ENCODE measurements at regions of chr6 and their contacts with region 1.

Region 1: GRCh38 chr6:42928986-42929820 is at the start of gene CNPY3:
- DNase-seq: peak; percentile 98
- H3K4me3 Mint-ChIP-seq: peak within 1 kb of the TSS; percentile 100
- H3K27ac Mint-ChIP-seq: peak within 1 kb of the TSS; percentile 94
- H3K4me1 Mint-ChIP-seq: peaks cover 36% of the 10 kb centered on the region
- H3K27me3 Mint-ChIP-seq: no peaks in the 10 kb centered on the region
- total RNA-seq, gene CNPY3: 51.1 to 53.2 TPM

Region 2: GRCh38 chr6:42782622-42783176 is 146.5 kb before region 1 on chr6:
- CTCF ChIA-PET with region 1: no interaction called
- POLR2A ChIA-PET with region 1: interaction called, 15 read pairs
- DNase-seq: peak; percentile 64
- H3K4me3 Mint-ChIP-seq: peak overlapping the region; percentile 95
- H3K27ac Mint-ChIP-seq: peak overlapping the region; percentile 100
- H3K4me1 Mint-ChIP-seq: peaks cover 18% of the 10 kb centered on the region
- H3K27me3 Mint-ChIP-seq: no peaks in the 10 kb centered on the region

Region 3: DNA sequence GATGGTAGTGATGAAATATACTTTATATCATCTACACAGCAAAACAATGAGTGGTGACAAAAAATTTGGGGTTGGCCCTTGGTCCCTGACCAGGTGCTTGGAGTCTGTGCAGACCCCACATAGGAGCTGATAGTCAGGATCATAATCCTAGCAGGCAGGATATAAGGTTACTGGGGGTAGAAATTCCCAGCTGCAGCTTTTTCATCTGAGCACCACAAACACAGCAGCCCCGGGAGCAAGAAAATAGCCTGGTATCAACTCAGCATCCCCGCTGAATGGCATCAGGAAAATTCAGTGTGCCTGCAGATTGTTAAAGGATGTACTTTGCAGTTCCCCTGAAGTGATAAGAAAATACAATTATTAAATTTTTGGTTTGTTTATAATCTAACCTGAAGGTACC is 77.6 kb before region 1 on chr6:
- CTCF ChIA-PET with region 1: no interaction called
- POLR2A ChIA-PET with region 1: no interaction called
- DNase-seq: no peak
- H3K4me3 Mint-ChIP-seq: no peak overlapping the region
- H3K27ac Mint-ChIP-seq: no peak overlapping the region
- H3K4me1 Mint-ChIP-seq: no peaks in the 10 kb centered on the region
- H3K27me3 Mint-ChIP-seq: no peaks in the 10 kb centered on the region

Region 4: DNA sequence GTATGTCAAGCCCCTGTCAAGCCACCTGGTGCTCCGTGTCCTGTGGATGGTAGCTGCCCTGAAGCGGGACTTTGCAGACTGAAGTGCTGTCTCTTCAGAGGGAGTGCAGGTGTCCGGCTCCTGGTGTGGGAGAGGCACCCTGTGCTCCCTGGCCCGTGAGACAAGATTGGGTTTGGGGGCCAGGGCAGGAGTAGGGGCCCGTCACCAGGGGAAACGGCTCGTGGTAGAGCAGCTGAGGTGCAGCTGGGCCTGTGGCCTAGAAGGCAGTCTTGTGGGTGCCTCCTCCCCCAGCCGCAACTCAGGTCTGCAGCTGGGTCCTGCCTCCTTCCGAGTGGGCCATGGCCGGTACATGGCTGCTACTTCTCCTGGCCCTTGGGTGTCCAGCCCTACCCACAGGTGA is 13.5 kb before region 1 on chr6 and contains the start of gene PTCRA:
- CTCF ChIA-PET with region 1: interaction called, 4 read pairs
- POLR2A ChIA-PET with region 1: interaction called, 11 read pairs
- DNase-seq: no peak
- H3K4me3 Mint-ChIP-seq: no peak within 1 kb of the TSS
- H3K27ac Mint-ChIP-seq: no peak within 1 kb of the TSS
- H3K4me1 Mint-ChIP-seq: peaks cover 2% of the 10 kb centered on the region
- H3K27me3 Mint-ChIP-seq: peaks cover 15% of the 10 kb centered on the region
- total RNA-seq, gene PTCRA: not detected

Region 5: DNA sequence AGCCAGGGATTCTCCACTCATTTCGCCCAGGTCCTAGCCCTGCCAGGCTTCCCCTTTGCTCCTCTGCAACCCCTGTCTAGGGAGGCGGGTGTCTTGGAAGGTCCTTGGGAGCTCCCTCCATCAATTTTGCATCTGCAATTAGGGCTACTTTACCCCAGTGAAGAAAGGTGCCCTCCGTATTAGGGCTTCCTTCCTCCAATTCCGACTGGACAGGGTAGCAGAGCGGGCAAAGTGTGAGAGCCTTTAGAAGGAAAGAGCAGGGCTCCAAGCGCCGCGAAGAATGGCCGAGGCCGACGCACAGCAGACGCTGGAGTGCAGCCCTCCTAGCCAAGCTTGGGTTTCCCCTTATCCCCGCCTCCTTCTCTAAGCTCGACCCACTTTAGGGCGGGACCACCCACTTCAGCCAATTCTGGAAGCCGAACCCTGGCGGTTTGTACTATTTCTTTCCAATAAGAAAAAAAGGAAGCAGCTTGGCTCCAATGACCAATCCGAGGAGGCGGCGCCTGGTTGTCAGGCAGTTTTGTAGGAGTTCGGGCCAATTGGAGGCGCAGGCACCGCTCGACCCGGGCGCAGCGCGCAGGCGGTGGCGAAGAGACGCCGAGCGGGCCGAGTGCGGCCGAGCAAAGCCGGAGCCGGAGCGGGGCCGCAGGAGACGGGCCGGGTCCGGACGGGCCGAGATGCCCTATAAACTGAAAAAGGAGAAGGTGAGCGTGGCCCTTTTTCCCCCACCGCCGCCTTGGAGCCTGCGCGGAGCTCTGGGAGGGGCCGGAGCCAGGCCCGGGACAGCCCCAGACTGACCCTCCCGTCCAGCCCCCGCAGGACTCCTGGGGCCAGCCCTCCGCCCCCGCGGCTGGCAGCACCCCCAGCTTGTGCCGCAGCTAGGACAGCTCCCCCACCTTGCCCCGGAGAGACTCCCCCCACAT is 55.1 kb after region 1 on chr6 and contains the start of gene PPP2R5D:
- CTCF ChIA-PET with region 1: interaction called, 7 read pairs
- POLR2A ChIA-PET with region 1: interaction called, 57 read pairs
- DNase-seq: peak; percentile 99
- H3K4me3 Mint-ChIP-seq: peak within 1 kb of the TSS; percentile 88
- H3K27ac Mint-ChIP-seq: peak within 1 kb of the TSS; percentile 82
- H3K4me1 Mint-ChIP-seq: peaks cover 55% of the 10 kb centered on the region
- H3K27me3 Mint-ChIP-seq: no peaks in the 10 kb centered on the region
- total RNA-seq, gene PPP2R5D: 56.8 to 59.3 TPM

Region 6: DNA sequence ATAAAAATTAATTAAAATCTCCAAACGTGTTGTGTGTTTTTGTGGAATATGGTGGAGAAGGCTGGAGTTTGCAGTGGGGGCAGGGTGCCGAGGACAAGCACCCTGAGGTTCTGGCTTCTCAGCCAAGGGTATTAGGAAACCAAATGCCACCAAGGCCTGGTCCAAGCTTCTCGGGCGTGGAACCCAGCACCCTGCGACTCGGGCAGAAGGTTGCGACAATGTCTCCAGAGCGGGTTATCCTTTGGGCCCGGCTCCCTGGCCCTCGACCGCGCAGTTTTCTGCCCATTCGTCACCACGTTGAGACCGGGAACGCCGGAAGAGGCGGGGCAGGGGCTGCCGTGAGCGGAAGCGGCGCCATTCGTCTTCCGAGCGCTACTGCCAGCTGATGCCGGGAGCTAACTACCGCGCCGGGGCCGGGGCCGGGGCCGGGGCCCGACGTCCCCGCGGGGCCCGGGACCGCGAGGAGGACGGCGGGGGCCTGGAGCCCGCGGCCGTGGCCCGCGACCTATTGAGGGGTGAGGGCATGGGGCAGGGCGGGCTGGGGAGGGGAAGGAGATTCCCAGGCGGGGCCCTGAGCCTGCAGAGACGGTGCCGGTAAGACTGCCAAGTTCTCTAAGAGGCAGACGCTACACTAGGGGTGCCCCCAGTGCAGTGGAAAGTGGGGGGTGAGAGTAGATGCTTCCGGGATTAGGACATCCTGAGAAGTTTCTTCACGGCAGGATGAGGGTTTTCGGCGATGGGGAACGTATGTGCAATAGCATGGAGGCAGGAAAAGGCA is 92.3 kb after region 1 on chr6 and contains the start of gene RRP36:
- CTCF ChIA-PET with region 1: interaction called, 3 read pairs
- POLR2A ChIA-PET with region 1: interaction called, 14 read pairs
- DNase-seq: peak; percentile 63
- H3K4me3 Mint-ChIP-seq: peak within 1 kb of the TSS; percentile 85
- H3K27ac Mint-ChIP-seq: peak within 1 kb of the TSS; percentile 79
- H3K4me1 Mint-ChIP-seq: peaks cover 46% of the 10 kb centered on the region
- H3K27me3 Mint-ChIP-seq: no peaks in the 10 kb centered on the region
- total RNA-seq, gene RRP36: 59.2 to 60.4 TPM

Region 7: GRCh38 chr6:43143235-43144124 is 214.3 kb after region 1 on chr6:
- CTCF ChIA-PET with region 1: interaction called, 10 read pairs
- POLR2A ChIA-PET with region 1: no interaction called
- DNase-seq: peak; percentile 79
- H3K4me3 Mint-ChIP-seq: no peak overlapping the region
- H3K27ac Mint-ChIP-seq: no peak overlapping the region
- H3K4me1 Mint-ChIP-seq: peaks cover 10% of the 10 kb centered on the region
- H3K27me3 Mint-ChIP-seq: no peaks in the 10 kb centered on the region